B cell (primary cell): ENCODE measurements at regions of chr14 and their contacts with region 1.

Region 1: DNA sequence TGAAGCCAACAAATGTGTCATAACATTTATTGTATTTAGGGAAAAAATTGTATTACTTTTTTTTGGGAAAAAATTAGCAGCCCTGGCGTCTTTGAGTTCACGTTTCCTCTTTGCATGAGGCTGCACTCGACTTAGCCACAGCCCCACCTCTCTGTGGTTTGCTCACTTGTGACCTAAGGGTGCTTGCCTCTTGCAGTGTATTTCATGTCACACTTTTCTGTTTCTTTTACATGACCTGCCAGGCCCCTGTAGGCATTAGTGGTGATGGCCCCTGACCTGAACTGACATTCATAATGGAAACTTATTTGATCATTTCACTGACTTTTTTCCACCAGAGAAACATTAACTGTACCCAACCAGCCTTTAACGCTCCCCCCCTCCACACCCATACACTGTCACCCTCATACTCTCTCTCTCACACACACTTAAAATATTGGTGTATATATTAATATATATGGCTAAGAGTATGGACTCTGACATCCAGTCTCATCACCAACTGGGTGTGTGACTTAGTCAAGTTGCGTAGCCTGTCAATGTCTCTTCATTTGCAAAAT is 122.9 kb downstream of the PRKCH start:
- DNase-seq: peak; percentile 60
- ATAC-seq: peak; percentile 87
- H3K4me3 ChIP-seq: no peak overlapping the region
- H3K4me3 Mint-ChIP-seq: no peak overlapping the region
- H3K27ac ChIP-seq: no peak overlapping the region
- H3K27ac Mint-ChIP-seq: peak overlapping the region; percentile 22
- H3K4me1 ChIP-seq: peaks cover 6 to 19% of the 10 kb centered on the region in 2 donors
- H3K4me1 Mint-ChIP-seq: peaks cover 23% of the 10 kb centered on the region
- H3K27me3 ChIP-seq: no peaks in the 10 kb centered on the region
- H3K27me3 Mint-ChIP-seq: peaks cover 7% of the 10 kb centered on the region
- CTCF ChIP-seq: no peak

Region 2: GRCh38 chr14:61296719-61297502 is 147.4 kb before region 1 on chr14:
- CTCF ChIA-PET with region 1: no interaction called
- POLR2A ChIA-PET with region 1: no interaction called
- intact Hi-C with region 1: no loop called
- DNase-seq: peak; percentile 36
- ATAC-seq: no peak
- H3K4me3 ChIP-seq: no peak overlapping the region
- H3K4me3 Mint-ChIP-seq: no peak overlapping the region
- H3K27ac ChIP-seq: no peak overlapping the region
- H3K27ac Mint-ChIP-seq: no peak overlapping the region
- H3K4me1 ChIP-seq: no peaks in the 10 kb centered on the region
- H3K4me1 Mint-ChIP-seq: no peaks in the 10 kb centered on the region
- H3K27me3 ChIP-seq: no peaks in the 10 kb centered on the region
- H3K27me3 Mint-ChIP-seq: peaks cover 10% of the 10 kb centered on the region
- CTCF ChIP-seq: peak; percentile 73

Region 3: DNA sequence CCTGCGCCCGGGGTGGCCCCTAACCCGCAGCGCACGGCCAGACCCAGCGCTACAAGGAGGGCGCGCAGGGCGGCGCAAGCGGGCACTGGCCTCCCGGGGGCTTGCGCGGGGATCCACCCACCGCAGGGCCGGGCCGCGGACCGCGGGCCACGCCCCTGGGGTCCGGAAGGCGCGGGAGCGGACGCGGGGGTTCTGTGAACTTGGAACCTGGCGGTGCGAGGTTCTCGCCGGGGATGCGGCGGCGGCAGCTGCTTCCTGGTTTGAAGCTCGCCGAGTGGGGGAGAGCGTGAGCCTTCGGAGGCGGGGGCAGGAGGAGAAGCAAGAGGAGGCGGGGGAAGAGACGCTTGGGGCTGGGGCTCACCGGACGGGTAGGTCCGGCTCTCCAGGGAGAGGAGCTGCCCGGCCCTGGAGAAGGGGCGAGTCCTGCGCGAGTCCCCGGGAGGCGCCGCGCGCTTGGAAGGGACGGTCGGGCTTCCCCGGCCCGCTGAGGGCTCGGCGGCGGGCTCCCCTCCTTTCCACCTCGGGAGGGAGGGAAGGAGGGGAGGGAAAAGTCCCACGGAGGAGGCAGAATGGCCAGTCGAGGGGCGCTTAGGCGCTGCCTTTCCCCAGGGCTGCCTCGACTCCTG is 122.8 kb before region 1 on chr14 and contains the start of gene PRKCH:
- CTCF ChIA-PET with region 1: no interaction called
- POLR2A ChIA-PET with region 1: no interaction called
- intact Hi-C with region 1: loop called (anchors 10 kb)
- DNase-seq: peak; percentile 73
- ATAC-seq: peak; percentile 81
- H3K4me3 ChIP-seq: peak within 1 kb of the TSS; percentile 41 to 64 (median 56)
- H3K4me3 Mint-ChIP-seq: peak within 1 kb of the TSS; percentile 86
- H3K27ac ChIP-seq: no peak within 1 kb of the TSS
- H3K27ac Mint-ChIP-seq: peak within 1 kb of the TSS; percentile 27
- H3K4me1 ChIP-seq: peaks cover 21 to 22% of the 10 kb centered on the region in 2 donors
- H3K4me1 Mint-ChIP-seq: peaks cover 15% of the 10 kb centered on the region
- H3K27me3 ChIP-seq: peaks cover 0 to 43% (median 6%) of the 10 kb centered on the region in 4 experiments
- H3K27me3 Mint-ChIP-seq: peaks cover 15% of the 10 kb centered on the region
- CTCF ChIP-seq: no peak
- total RNA-seq, gene PRKCH: 4.9 and 5.0 TPM in 2 replicates